GM13977 (cell line): ENCODE measurements at regions of chr11 and their contacts with region 1.

Region 1: GRCh38 chr11:72831513-72832300 is 17.5 kb downstream of the ATG16L2 start:
- DNase-seq: no peak
- CTCF ChIP-seq: peak; percentile 92

Region 2: GRCh38 chr11:72951193-72951592 is 119.5 kb after region 1 on chr11:
- in situ Hi-C with region 1: no loop called
- DNase-seq: no peak
- CTCF ChIP-seq: no peak

Region 3: GRCh38 chr11:73177778-73178577 is 346.3 kb after region 1 on chr11:
- in situ Hi-C with region 1: loop called (anchors 10 kb)
- DNase-seq: peak; percentile 87
- CTCF ChIP-seq: peak; percentile 86